ENCODE measurements at regions of chr11 and their contacts with region 1.

Region 1: GRCh38 chr11:30917859-30918478 is 331.8 kb upstream of the MPPED2 start:
- DNase-seq: peak; percentile 13 to 50 (median 32)
- ATAC-seq: peak; percentile 65; the same call in 2 of the 3 replicates
- H3K4me3 ChIP-seq: no peak overlapping the region
- H3K27ac ChIP-seq: no peak overlapping the region
- H3K4me1 ChIP-seq: no peaks in the 10 kb centered on the region
- H3K27me3 ChIP-seq: no peaks in the 10 kb centered on the region
- CTCF ChIP-seq: peak in 2 of 3 experiments; percentile 52 to 67; a peak in 3 of 6 replicates
- EP300 ChIP-seq: no peak
- POLR2A ChIP-seq: no peak
- RAD21 ChIP-seq: peak; percentile 42 to 67

Region 2: GRCh38 chr11:30346068-30346688 is 571.8 kb before region 1 on chr11:
- CTCF ChIA-PET with region 1: no interaction called
- POLR2A ChIA-PET with region 1: no interaction called
- in situ Hi-C with region 1: loop called (anchors 5 kb)
- intact Hi-C with region 1: loop called (anchors 1 kb)
- DNase-seq: peak; percentile 37 to 73 (median 38)
- ATAC-seq: peak; percentile 84
- H3K4me3 ChIP-seq: no peak overlapping the region
- H3K27ac ChIP-seq: no peak overlapping the region
- H3K4me1 ChIP-seq: no peaks in the 10 kb centered on the region
- H3K27me3 ChIP-seq: no peaks in the 10 kb centered on the region
- CTCF ChIP-seq: peak; percentile 38 to 76 (median 43); a peak in 4 of 6 replicates
- EP300 ChIP-seq: no peak
- POLR2A ChIP-seq: no peak
- RAD21 ChIP-seq: peak; percentile 60 to 66

Measured in K562 (cell line).